Left lung (tissue), 14 donors: ENCODE measurements at regions of chr1 and their contacts with region 1.

Region 1: GRCh38 chr1:180515864-180516388 is 13.5 kb upstream of the ACBD6 start:
- DNase-seq: peak in 3 of 4 donors; percentile 46 to 88 (median 76)
- ATAC-seq: peak; percentile 100
- H3K4me3 ChIP-seq: no peak overlapping the region
- H3K27ac ChIP-seq: peak overlapping the region in 1 of 2 donors; percentile 10
- H3K4me1 ChIP-seq: peaks cover 0 to 13% of the 10 kb centered on the region in 2 donors
- H3K27me3 ChIP-seq: no peaks in the 10 kb centered on the region
- CTCF ChIP-seq: peak; percentile 77 to 84

Region 2: DNA sequence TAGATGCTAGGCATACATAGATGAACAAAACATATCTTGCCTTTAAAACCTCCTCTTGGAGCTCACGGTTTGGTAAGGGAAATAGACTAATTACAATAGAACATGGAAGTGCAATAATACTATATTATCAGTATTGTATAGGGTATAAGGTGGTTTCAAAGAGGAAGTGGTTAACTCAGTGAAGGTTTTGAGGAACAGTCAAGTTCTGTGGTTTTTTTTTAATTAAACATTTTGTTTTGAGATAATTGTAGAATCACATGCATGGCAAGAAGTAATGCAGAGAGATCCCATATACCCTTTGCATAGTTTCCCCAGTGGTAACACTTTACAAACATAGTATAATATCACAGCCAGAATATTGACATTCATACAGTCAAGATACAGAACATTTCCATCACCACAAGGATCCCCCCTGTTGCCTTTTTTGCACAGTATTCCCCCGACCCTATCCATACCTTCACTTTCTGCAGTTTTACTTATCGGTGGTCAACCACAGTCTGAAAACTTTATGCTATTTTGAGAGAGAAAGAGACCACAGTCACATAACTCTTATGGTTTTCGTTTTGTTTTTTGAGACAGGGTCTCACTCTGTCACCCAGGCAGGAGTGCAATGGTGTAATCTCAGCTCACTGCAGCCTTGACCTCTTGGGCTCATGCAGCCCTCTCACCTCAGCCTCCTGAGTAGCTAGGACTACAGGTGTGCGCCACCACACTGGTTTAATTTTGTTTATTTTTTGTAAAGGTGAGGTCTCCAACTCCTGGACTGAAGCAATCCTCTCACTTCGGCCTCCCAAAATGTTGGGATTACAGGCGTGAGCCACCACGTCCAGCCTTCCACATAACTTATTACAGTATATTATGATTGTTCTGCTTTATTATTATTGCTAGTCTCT is 336.3 kb after region 1 on chr1:
- intact Hi-C with region 1: loop called in 1 of 2 experiments (anchors 10 kb)
- DNase-seq: no peak
- ATAC-seq: no peak
- H3K4me3 ChIP-seq: no peak overlapping the region
- H3K27ac ChIP-seq: no peak overlapping the region
- H3K4me1 ChIP-seq: peaks cover 0 to 9% of the 10 kb centered on the region in 2 donors
- H3K27me3 ChIP-seq: no peaks in the 10 kb centered on the region
- CTCF ChIP-seq: no peak

Region 3: GRCh38 chr1:180863158-180863775 is 347.3 kb after region 1 on chr1:
- intact Hi-C with region 1: loop called (anchors 5 to 10 kb)
- DNase-seq: peak in 2 of 4 donors; percentile 51 to 66
- ATAC-seq: peak; percentile 84
- H3K4me3 ChIP-seq: no peak overlapping the region
- H3K27ac ChIP-seq: no peak overlapping the region
- H3K4me1 ChIP-seq: peaks cover 0 to 7% of the 10 kb centered on the region in 2 donors
- H3K27me3 ChIP-seq: no peaks in the 10 kb centered on the region
- CTCF ChIP-seq: peak; percentile 56 to 72